B cell (primary cell): ENCODE measurements at regions of chr22 and their contacts with region 1.

Region 1: GRCh38 chr22:38755911-38756532 is at the start of gene SUN2:
- DNase-seq: peak; percentile 94
- ATAC-seq: peak; percentile 74
- H3K4me3 ChIP-seq: peak within 1 kb of the TSS; percentile 59 to 97 (median 82)
- H3K4me3 Mint-ChIP-seq: peak within 1 kb of the TSS; percentile 100
- H3K27ac ChIP-seq: peak within 1 kb of the TSS; percentile 71 to 81
- H3K27ac Mint-ChIP-seq: peak within 1 kb of the TSS; percentile 99
- H3K4me1 ChIP-seq: peaks cover 63 to 82% of the 10 kb centered on the region in 2 donors
- H3K4me1 Mint-ChIP-seq: peaks cover 65% of the 10 kb centered on the region
- H3K27me3 ChIP-seq: no peaks in the 10 kb centered on the region
- H3K27me3 Mint-ChIP-seq: no peaks in the 10 kb centered on the region
- CTCF ChIP-seq: no peak
- total RNA-seq, gene SUN2: 305 and 322 TPM in 2 replicates

Region 2: GRCh38 chr22:38506118-38506962 is 249.7 kb before region 1 on chr22 and contains the start of gene DDX17:
- CTCF ChIA-PET with region 1: no interaction called
- POLR2A ChIA-PET with region 1: no interaction called
- intact Hi-C with region 1: loop called (anchors 5 kb)
- DNase-seq: peak; percentile 99
- ATAC-seq: peak; percentile 87
- H3K4me3 ChIP-seq: peak within 1 kb of the TSS; percentile 78 to 99 (median 93)
- H3K4me3 Mint-ChIP-seq: peak within 1 kb of the TSS; percentile 99
- H3K27ac ChIP-seq: peak within 1 kb of the TSS; percentile 98
- H3K27ac Mint-ChIP-seq: peak within 1 kb of the TSS; percentile 100
- H3K4me1 ChIP-seq: peaks cover 39 to 40% of the 10 kb centered on the region in 2 donors
- H3K4me1 Mint-ChIP-seq: peaks cover 51% of the 10 kb centered on the region
- H3K27me3 ChIP-seq: no peaks in the 10 kb centered on the region
- H3K27me3 Mint-ChIP-seq: no peaks in the 10 kb centered on the region
- CTCF ChIP-seq: no peak
- total RNA-seq, gene DDX17: 936 and 967 TPM in 2 replicates

Region 3: GRCh38 chr22:38705235-38706100 is 50.6 kb before region 1 on chr22 and contains the start of gene GTPBP1:
- CTCF ChIA-PET with region 1: interaction called, 3 read pairs
- POLR2A ChIA-PET with region 1: interaction called, 3 read pairs
- intact Hi-C with region 1: loop called (anchors 1 kb)
- DNase-seq: peak; percentile 100
- ATAC-seq: peak; percentile 75
- H3K4me3 ChIP-seq: peak within 1 kb of the TSS; percentile 64 to 93 (median 88)
- H3K4me3 Mint-ChIP-seq: peak within 1 kb of the TSS; percentile 94
- H3K27ac ChIP-seq: peak within 1 kb of the TSS; percentile 83 to 91
- H3K27ac Mint-ChIP-seq: peak within 1 kb of the TSS; percentile 98
- H3K4me1 ChIP-seq: peaks cover 51 to 54% of the 10 kb centered on the region in 2 donors
- H3K4me1 Mint-ChIP-seq: peaks cover 65% of the 10 kb centered on the region
- H3K27me3 ChIP-seq: no peaks in the 10 kb centered on the region
- H3K27me3 Mint-ChIP-seq: no peaks in the 10 kb centered on the region
- CTCF ChIP-seq: peak; percentile 26
- total RNA-seq, gene GTPBP1: 174 and 175 TPM in 2 replicates

Region 4: DNA sequence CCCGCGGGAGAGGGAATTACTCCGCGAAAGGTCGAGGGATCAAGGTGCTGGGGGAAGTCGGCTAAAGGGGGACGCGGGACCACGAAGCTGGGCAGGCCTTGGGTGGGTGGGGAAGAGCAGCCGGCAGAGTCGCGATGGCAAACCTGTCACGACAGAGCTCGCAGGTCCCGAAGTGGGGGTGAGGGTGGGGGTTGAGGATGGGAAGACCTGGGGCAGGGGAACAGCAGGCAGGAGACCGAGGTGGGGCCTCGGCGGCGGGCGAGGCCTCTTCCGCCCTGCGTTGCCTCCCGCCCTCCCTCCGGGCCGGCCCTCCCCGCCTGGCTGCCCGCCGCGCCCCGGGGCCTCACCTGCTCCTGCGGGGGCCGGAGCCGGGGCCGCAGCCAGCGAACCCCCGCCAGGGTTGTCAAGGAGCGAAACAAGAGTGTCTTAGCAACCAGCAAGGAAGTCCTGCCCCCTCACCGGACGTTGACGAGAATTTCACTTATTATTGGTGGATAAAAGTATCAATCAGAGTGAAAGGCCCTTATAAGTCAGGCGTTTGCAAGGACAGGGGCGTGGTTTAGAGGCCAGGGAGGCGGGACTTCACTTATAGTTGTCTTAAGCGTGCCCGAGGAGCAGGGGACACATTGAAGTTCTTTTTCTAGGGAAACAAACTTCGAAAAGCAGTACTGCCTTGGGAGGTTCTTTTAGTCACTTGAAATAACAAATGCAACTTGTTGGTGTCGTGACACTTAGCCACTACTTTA is 37.9 kb after region 1 on chr22 and contains the start of gene DNAL4:
- CTCF ChIA-PET with region 1: no interaction called
- POLR2A ChIA-PET with region 1: no interaction called
- intact Hi-C with region 1: loop called (anchors 1 kb)
- DNase-seq: peak; percentile 98
- ATAC-seq: peak; percentile 98
- H3K4me3 ChIP-seq: peak within 1 kb of the TSS; percentile 54 to 85 (median 66)
- H3K4me3 Mint-ChIP-seq: peak within 1 kb of the TSS; percentile 95
- H3K27ac ChIP-seq: peak within 1 kb of the TSS; percentile 47 to 85
- H3K27ac Mint-ChIP-seq: peak within 1 kb of the TSS; percentile 86
- H3K4me1 ChIP-seq: peaks cover 10 to 14% of the 10 kb centered on the region in 2 donors
- H3K4me1 Mint-ChIP-seq: peaks cover 19% of the 10 kb centered on the region
- H3K27me3 ChIP-seq: peaks cover 0 to 17% (median 4%) of the 10 kb centered on the region in 4 experiments
- H3K27me3 Mint-ChIP-seq: peaks cover 26% of the 10 kb centered on the region
- CTCF ChIP-seq: no peak
- total RNA-seq, gene DNAL4: 9.0 and 10.3 TPM in 2 replicates

Region 5: GRCh38 chr22:38834215-38834953 is 78.4 kb after region 1 on chr22:
- CTCF ChIA-PET with region 1: no interaction called
- POLR2A ChIA-PET with region 1: no interaction called
- intact Hi-C with region 1: no loop called
- DNase-seq: no peak
- ATAC-seq: no peak
- H3K4me3 ChIP-seq: no peak overlapping the region
- H3K4me3 Mint-ChIP-seq: no peak overlapping the region
- H3K27ac ChIP-seq: no peak overlapping the region
- H3K27ac Mint-ChIP-seq: no peak overlapping the region
- H3K4me1 ChIP-seq: no peaks in the 10 kb centered on the region
- H3K4me1 Mint-ChIP-seq: no peaks in the 10 kb centered on the region
- H3K27me3 ChIP-seq: peaks cover 0 to 12% (median 0%) of the 10 kb centered on the region in 4 experiments
- H3K27me3 Mint-ChIP-seq: peaks cover 33% of the 10 kb centered on the region
- CTCF ChIP-seq: no peak

Region 6: DNA sequence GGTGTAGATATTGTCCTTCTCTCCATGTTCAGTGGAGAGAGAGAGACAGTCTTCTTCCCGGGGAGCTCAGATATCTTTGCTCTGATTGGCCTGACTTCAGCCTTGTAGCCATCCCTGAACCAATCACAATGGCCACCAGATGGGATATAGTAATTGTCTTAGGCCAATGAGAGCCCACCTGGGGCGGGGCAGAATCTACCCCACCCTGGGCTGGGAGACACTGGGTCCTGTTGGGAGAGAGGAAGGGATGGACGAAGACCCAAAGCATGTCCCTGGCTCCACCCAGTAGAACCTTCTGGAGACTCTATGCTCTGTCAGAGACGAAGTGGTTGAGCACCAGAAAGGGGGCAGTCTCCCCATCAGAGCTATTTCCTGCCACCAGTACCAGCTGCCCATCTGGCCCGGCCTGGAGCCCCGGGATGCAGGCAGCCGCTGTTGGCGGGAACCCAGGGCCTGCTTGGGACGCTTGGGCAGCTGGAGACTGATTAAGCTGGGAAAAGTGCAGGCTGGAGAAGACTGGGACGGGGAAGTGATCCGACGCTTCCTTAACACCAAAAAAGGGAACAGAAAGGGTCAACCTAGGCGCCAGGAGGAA is 428.1 kb after region 1 on chr22:
- CTCF ChIA-PET with region 1: no interaction called
- POLR2A ChIA-PET with region 1: no interaction called
- intact Hi-C with region 1: no loop called
- DNase-seq: no peak
- ATAC-seq: no peak
- H3K4me3 ChIP-seq: no peak overlapping the region
- H3K4me3 Mint-ChIP-seq: no peak overlapping the region
- H3K27ac ChIP-seq: no peak overlapping the region
- H3K27ac Mint-ChIP-seq: no peak overlapping the region
- H3K4me1 ChIP-seq: no peaks in the 10 kb centered on the region
- H3K4me1 Mint-ChIP-seq: no peaks in the 10 kb centered on the region
- H3K27me3 ChIP-seq: peaks cover 0 to 17% (median 0%) of the 10 kb centered on the region in 4 experiments
- H3K27me3 Mint-ChIP-seq: peaks cover 17% of the 10 kb centered on the region
- CTCF ChIP-seq: no peak

Region 7: DNA sequence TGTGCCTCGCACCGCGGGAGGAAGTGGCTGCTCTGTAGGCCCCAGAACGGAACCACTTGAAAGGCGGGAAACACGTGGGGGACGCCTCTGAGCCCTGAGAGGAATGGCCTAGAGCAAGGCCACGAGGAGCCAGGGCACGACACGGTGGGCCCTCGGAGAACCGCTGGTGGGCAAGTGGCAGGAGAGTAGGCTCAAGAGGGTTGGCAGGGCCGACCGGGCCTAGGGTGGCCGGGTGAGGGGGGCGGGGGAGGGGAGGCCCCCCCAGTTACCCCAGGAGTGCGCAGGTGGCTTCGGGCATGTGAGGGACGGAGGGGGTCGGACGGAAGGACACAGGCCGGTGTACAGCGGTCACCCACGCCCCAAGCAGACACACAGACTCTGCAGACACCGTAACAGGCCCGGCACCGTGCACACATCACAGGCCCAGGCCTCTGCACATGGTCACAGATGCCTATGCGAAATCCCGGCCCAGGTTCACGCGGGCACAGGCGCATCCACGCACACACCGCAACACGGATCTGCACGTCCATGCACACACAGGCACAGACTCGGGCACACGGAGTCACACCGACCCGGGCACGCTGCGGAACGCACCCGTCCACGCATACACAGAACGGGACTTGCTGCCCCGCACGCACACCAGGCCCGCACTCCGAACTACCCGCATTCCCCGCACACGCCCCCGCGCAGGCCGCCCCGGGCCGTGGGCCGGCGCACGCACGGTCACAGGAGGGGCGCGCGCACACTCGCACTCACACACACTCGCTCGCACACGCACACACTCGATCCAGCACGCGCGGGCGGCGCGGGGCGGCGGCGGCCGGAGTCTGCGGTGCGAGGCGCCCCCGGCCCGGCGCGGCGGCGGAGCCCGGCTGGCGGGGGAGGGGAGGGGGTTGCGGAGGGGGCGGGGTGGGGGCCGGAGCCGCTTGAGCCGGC is 700.5 kb after region 1 on chr22 and contains the start of gene MGAT3:
- CTCF ChIA-PET with region 1: no interaction called
- POLR2A ChIA-PET with region 1: interaction called, 11 read pairs
- intact Hi-C with region 1: no loop called
- DNase-seq: peak; percentile 41
- ATAC-seq: peak; percentile 12
- H3K4me3 ChIP-seq: peak within 1 kb of the TSS in 4 of 5 experiments; percentile 38 to 65 (median 56)
- H3K4me3 Mint-ChIP-seq: peak within 1 kb of the TSS; percentile 85
- H3K27ac ChIP-seq: no peak within 1 kb of the TSS
- H3K27ac Mint-ChIP-seq: peak within 1 kb of the TSS; percentile 88
- H3K4me1 ChIP-seq: peaks cover 20 to 23% of the 10 kb centered on the region in 2 donors
- H3K4me1 Mint-ChIP-seq: peaks cover 60% of the 10 kb centered on the region
- H3K27me3 ChIP-seq: peaks cover 0 to 23% (median 5%) of the 10 kb centered on the region in 4 experiments
- H3K27me3 Mint-ChIP-seq: peaks cover 9% of the 10 kb centered on the region
- CTCF ChIP-seq: no peak
- total RNA-seq, gene MGAT3: 27.8 and 28.0 TPM in 2 replicates